ENCODE measurements at regions of chr12 and their contacts with region 1.

Region 1: DNA sequence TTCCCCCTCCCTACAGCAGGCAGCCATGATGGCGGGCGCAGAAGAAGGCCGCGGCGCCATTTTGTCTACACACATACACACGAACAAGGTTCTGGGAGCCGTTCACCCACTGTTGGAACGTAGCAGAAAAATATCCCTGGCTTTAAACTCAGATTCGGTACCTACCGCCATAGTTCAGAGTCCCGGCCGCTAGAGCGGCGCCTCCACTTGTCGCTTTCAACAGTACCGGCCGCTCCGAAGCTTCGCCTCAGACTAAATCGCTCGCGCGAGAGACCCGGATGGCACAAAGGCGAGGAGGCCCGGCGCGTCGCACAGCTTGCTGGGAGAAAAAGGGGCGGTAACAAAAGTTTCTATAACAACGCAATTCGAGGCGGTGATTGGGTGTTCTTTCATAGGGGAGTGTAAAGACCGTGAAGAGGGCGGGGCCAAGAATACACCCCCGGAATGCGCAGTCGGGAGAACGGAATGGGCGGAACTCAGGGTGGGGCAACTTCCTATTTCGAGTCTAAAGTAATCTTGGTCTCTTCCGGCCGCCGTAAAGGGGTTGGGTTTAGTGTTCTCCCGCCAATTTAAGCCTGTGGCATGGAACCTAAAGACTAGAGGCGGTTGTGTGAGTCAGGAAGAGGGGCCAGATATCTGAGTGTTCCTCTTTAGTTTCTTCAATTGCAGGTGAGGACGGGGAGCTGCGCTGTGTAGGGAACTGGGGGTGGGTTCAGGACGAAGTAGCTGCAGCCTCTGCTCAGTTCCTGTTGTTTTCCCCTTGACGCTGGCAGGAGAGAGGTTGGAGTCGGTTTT is at the starts of genes KNTC1 and RSRC2:
- DNase-seq: peak; percentile 87 to 99 (median 99)
- ATAC-seq: peak; percentile 96
- H3K4me3 ChIP-seq: peak within 1 kb of the TSS; percentile 86
- H3K4me3 Mint-ChIP-seq: no peak within 1 kb of the TSS
- H3K27ac ChIP-seq: peak within 1 kb of the TSS; percentile 94
- H3K27ac Mint-ChIP-seq: peak within 1 kb of the TSS in 1 of 9 donors; percentile 68
- H3K4me1 ChIP-seq: peaks cover 30 to 37% of the 10 kb centered on the region in 2 donors
- H3K4me1 Mint-ChIP-seq: peaks cover 24 to 41% (median 36%) of the 10 kb centered on the region in 7 donors
- H3K27me3 ChIP-seq: no peaks in the 10 kb centered on the region
- H3K27me3 Mint-ChIP-seq: no peaks in the 10 kb centered on the region
- total RNA-seq, gene KNTC1: 24.5 to 102 (median 31.0) TPM
- total RNA-seq, gene RSRC2: 89.7 to 249 (median 139) TPM

Region 2: DNA sequence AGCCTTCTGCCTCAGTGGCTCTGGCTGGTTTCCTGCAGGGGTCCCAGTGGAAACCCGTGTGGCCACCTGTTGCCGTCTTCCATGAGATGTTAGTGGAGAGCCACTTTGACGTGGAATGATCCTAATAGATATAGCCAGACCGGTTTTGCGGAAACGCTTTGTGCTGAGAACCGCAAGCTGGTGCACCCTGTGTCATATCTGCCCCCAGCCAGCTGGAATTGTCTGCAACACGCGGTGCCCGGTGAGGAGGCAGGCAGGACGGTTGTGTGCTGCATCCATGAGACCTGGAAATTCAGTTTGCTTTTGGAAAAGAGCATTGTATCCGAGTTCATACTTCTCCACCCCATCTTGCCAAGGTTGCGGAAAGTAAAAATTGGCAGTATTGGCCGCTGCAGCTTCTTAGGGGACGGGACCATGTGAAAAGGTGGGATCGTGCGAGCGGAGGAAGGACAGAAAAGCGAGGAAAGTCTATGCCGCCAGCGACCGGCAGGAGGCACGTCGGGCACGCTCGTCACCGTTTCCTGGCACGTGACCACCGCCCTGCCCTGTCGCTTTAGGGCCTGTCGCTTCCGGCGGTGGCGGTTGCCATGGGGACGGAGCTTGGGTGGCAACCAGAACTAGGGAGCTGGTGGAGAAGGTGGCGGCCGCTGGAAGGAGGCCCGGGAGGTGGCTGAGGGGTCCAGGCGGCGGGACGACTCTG is 608.8 kb before region 1 on chr12 and contains the start of gene CFAP251:
- CTCF ChIA-PET with region 1: no interaction called
- POLR2A ChIA-PET with region 1: no interaction called
- intact Hi-C with region 1: loop called in 1 of 2 experiments (anchors 1 kb)
- DNase-seq: peak; percentile 88 to 98 (median 94)
- ATAC-seq: peak; percentile 99
- H3K4me3 ChIP-seq: peak within 1 kb of the TSS; percentile 58
- H3K4me3 Mint-ChIP-seq: peak within 1 kb of the TSS; percentile 68 to 94 (median 86)
- H3K27ac ChIP-seq: peak within 1 kb of the TSS; percentile 71
- H3K27ac Mint-ChIP-seq: peak within 1 kb of the TSS; percentile 91 to 98 (median 93)
- H3K4me1 ChIP-seq: peaks cover 4 to 10% of the 10 kb centered on the region in 2 donors
- H3K4me1 Mint-ChIP-seq: peaks cover 8 to 19% (median 13%) of the 10 kb centered on the region in 7 donors
- H3K27me3 ChIP-seq: no peaks in the 10 kb centered on the region
- H3K27me3 Mint-ChIP-seq: no peaks in the 10 kb centered on the region
- total RNA-seq, gene CFAP251: 0.38 to 1.5 (median 0.88) TPM

Region 3: DNA sequence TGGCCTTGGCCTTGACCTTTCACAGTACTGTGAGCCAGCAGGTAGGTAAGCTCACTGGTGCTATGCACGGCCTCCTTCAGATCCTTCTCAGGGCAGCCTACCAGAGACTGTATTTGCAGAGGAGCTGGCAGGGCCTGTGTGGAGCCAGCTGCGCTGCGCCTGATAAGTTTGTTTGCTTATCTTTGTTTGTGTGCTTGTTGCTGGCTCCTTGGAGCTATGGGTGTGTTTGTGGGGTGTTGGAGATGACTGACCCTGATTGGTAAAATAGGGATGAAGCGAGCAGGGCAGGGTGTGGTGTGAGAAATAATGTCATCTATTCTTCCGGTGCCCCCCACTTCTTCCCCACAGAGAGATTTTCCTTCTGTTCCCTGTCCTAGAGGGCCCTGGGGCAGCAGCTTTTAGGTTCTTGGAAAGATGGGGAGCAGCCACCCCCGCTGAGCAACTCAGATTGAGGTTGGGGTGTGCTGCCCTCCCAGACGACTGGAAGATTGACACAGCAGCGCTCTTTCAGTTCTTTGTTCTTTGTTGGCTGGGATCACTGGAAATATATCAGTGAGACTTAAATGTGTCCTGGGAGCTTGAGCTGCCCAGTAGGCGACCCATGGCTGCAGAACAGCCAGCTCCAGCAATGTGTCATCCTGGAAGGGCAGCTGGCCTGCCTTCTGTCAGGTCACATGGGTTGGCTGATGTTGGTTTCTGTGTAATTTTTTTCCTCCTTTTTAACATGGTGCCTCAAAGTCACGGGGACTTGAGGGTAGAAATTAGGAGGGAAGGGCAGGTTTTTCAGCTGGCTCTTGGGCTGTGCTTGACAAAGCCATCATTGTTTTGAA is 428.7 kb before region 1 on chr12:
- CTCF ChIA-PET with region 1: no interaction called
- POLR2A ChIA-PET with region 1: no interaction called
- intact Hi-C with region 1: no loop called
- DNase-seq: no peak
- ATAC-seq: peak; percentile 28
- H3K4me3 ChIP-seq: no peak overlapping the region
- H3K4me3 Mint-ChIP-seq: peak overlapping the region in 9 of 10 donors; percentile 66 to 83 (median 76)
- H3K27ac ChIP-seq: peak overlapping the region; percentile 62
- H3K27ac Mint-ChIP-seq: peak overlapping the region in 7 of 9 donors; percentile 62 to 98 (median 94)
- H3K4me1 ChIP-seq: peaks cover 25 to 77% of the 10 kb centered on the region in 2 donors
- H3K4me1 Mint-ChIP-seq: peaks cover 49 to 73% (median 66%) of the 10 kb centered on the region in 7 donors
- H3K27me3 ChIP-seq: no peaks in the 10 kb centered on the region
- H3K27me3 Mint-ChIP-seq: no peaks in the 10 kb centered on the region

Region 4: GRCh38 chr12:122500685-122501488 is 26.0 kb before region 1 on chr12 and contains the start of gene ZCCHC8:
- CTCF ChIA-PET with region 1: interaction called, 8 read pairs
- POLR2A ChIA-PET with region 1: interaction called, 115 read pairs
- intact Hi-C with region 1: loop called (anchors 1 kb)
- DNase-seq: peak; percentile 83 to 97 (median 94)
- ATAC-seq: peak; percentile 96
- H3K4me3 ChIP-seq: peak within 1 kb of the TSS; percentile 97
- H3K4me3 Mint-ChIP-seq: peak within 1 kb of the TSS; percentile 83 to 99 (median 96)
- H3K27ac ChIP-seq: peak within 1 kb of the TSS; percentile 92
- H3K27ac Mint-ChIP-seq: peak within 1 kb of the TSS; percentile 89 to 98 (median 96)
- H3K4me1 ChIP-seq: peaks cover 9 to 15% of the 10 kb centered on the region in 2 donors
- H3K4me1 Mint-ChIP-seq: peaks cover 22 to 47% (median 39%) of the 10 kb centered on the region in 7 donors
- H3K27me3 ChIP-seq: no peaks in the 10 kb centered on the region
- H3K27me3 Mint-ChIP-seq: no peaks in the 10 kb centered on the region
- total RNA-seq, gene ZCCHC8: 44.4 to 54.0 (median 46.8) TPM

Region 5: DNA sequence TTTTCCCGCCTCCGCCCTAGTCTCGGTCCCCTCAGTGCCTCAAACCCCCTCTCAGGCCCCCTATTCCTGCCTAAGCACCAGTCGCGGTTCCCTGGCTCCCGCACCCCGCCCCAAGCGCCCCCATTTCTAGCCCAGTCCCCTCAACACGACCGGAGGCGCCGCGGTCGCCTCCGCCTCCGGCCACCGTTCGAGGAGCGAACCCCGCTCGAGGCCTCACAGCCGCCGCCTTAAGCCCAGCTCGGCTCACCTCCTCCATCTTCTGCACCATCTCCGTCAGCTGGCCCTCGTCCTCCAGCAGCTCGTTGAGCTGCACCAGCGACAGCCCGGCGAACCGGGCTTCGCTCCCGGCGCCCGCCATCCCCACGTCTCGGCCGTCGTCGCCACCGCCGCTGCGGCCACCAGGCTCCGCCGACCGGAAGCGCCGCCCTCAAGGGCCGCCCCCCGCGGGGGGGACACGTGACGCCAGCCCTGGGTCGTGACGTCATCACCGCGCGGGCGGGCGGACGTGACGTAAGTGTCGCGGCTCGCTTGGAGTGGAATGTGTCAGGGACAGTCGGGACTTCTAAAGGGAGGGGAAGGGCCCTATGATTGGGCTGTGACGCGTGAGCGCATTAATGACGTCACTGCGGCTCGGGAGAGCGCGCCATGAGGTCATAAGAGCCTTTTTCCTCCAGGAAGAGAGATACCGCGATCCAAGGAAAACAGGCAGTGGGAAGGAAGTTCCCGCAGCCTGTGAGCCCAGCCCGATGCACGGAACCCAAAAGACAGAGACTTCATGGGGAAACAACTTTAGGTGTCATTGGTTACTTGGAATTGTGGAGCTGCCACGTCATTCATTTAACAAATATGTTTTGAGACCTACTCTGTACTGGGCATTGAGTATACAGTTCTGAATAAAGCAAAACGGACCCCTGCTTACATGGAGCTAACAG is 369.1 kb after region 1 on chr12 and contains the start of gene VPS37B:
- CTCF ChIA-PET with region 1: no interaction called
- POLR2A ChIA-PET with region 1: no interaction called
- intact Hi-C with region 1: loop called in 1 of 2 experiments (anchors 10 kb)
- DNase-seq: peak; percentile 91 to 97 (median 94)
- ATAC-seq: peak; percentile 85
- H3K4me3 ChIP-seq: peak within 1 kb of the TSS; percentile 82
- H3K4me3 Mint-ChIP-seq: peak within 1 kb of the TSS; percentile 86 to 99 (median 95)
- H3K27ac ChIP-seq: peak within 1 kb of the TSS; percentile 97
- H3K27ac Mint-ChIP-seq: peak within 1 kb of the TSS; percentile 72 to 100 (median 99)
- H3K4me1 ChIP-seq: peaks cover 59 to 75% of the 10 kb centered on the region in 2 donors
- H3K4me1 Mint-ChIP-seq: peaks cover 67 to 96% (median 87%) of the 10 kb centered on the region in 7 donors
- H3K27me3 ChIP-seq: no peaks in the 10 kb centered on the region
- H3K27me3 Mint-ChIP-seq: peaks cover 0 to 13% (median 0%) of the 10 kb centered on the region in 5 donors
- total RNA-seq, gene VPS37B: 25.3 to 101 (median 30.1) TPM

Region 6: GRCh38 chr12:123601602-123602489 is 1075.0 kb after region 1 on chr12 and contains the start of gene DDX55:
- CTCF ChIA-PET with region 1: no interaction called
- POLR2A ChIA-PET with region 1: interaction called, 4 read pairs
- intact Hi-C with region 1: loop called in 1 of 2 experiments (anchors 5 kb)
- DNase-seq: peak; percentile 77 to 87 (median 86)
- ATAC-seq: peak; percentile 96
- H3K4me3 ChIP-seq: peak within 1 kb of the TSS; percentile 99
- H3K4me3 Mint-ChIP-seq: peak within 1 kb of the TSS; percentile 89 to 99 (median 97)
- H3K27ac ChIP-seq: peak within 1 kb of the TSS; percentile 84
- H3K27ac Mint-ChIP-seq: peak within 1 kb of the TSS; percentile 83 to 98 (median 93)
- H3K4me1 ChIP-seq: peaks cover 4 to 8% of the 10 kb centered on the region in 2 donors
- H3K4me1 Mint-ChIP-seq: peaks cover 11 to 47% (median 30%) of the 10 kb centered on the region in 7 donors
- H3K27me3 ChIP-seq: no peaks in the 10 kb centered on the region
- H3K27me3 Mint-ChIP-seq: no peaks in the 10 kb centered on the region
- total RNA-seq, gene DDX55: 26.0 to 54.0 (median 43.4) TPM